Endothelial cell of umbilical vein (primary cell): ENCODE measurements at regions of chr1 and their contacts with region 1.

Region 1: DNA sequence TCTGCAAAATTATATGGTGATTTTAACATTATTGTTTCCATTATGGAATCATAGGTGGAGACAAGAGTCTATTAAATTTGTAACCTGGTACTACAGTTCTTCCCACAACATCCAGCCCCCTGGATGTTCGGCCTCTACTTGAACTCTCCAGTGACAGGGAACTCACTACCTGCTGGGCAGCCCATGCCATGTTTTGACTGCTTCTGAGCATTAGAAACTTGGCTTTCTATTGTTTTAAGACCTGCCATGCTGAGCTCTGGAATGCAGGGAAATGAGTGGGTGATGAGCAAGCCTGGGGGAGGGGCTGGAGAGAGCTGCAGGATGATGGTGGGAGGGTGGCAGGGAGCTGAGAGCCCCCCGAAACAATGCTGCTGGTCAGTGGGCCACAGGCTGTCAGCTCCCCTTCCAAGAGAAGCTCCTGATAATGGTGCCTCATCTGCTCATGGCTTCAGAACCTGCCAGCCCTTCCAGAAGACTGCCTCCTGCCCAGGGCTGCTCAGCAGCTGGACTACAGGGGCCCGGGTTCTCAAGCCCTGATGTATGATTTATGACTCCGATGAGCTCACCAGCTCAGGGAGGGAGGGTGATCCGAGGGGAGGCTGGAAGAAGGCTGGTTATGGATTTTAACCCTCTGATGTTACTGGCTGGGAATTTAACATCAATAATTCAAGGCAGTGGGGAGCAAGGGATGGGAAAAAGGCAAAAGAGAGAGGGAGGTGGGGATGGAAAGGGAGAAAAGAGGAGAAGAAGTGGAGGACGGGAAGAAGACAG is 205.0 kb downstream of the HIVEP3 start:
- DNase-seq: peak; percentile 86
- H3K4me3 ChIP-seq: no peak overlapping the region
- H3K27ac ChIP-seq: peak overlapping the region; percentile 71
- H3K4me1 ChIP-seq: peaks cover 21% of the 10 kb centered on the region
- H3K27me3 ChIP-seq: no peaks in the 10 kb centered on the region
- CTCF ChIP-seq: no peak
- POLR2A ChIP-seq: no peak

Region 2: GRCh38 chr1:41662061-41662764 is 51.5 kb before region 1 on chr1:
- CTCF ChIA-PET with region 1: interaction called, 5 read pairs
- POLR2A ChIA-PET with region 1: no interaction called
- dilution Hi-C with region 1: no loop called
- intact Hi-C with region 1: loop called (anchors 2 kb)
- DNase-seq: peak; percentile 43
- H3K4me3 ChIP-seq: peak overlapping the region in 2 of 3 experiments; percentile 46 to 49
- H3K27ac ChIP-seq: no peak overlapping the region
- H3K4me1 ChIP-seq: peaks cover 7% of the 10 kb centered on the region
- H3K27me3 ChIP-seq: peaks cover 0 to 6% of the 10 kb centered on the region in 2 experiments
- CTCF ChIP-seq: no peak
- POLR2A ChIP-seq: no peak

Region 3: GRCh38 chr1:41728403-41729202 is 14.9 kb after region 1 on chr1:
- CTCF ChIA-PET with region 1: interaction called, 13 read pairs
- POLR2A ChIA-PET with region 1: no interaction called
- dilution Hi-C with region 1: no loop called
- intact Hi-C with region 1: loop called (anchors 1 kb)
- DNase-seq: no peak
- H3K4me3 ChIP-seq: no peak overlapping the region
- H3K27ac ChIP-seq: no peak overlapping the region
- H3K4me1 ChIP-seq: peaks cover 26% of the 10 kb centered on the region
- H3K27me3 ChIP-seq: no peaks in the 10 kb centered on the region
- CTCF ChIP-seq: no peak
- POLR2A ChIP-seq: no peak